ENCODE measurements at regions of chr2 and their contacts with region 1.

Region 1: GRCh38 chr2:191573216-191573615 is 104.7 kb upstream of the NABP1 start:
- DNase-seq: no peak
- H3K4me3 Mint-ChIP-seq: peak overlapping the region; percentile 23
- H3K27ac Mint-ChIP-seq: peak overlapping the region; percentile 15
- H3K4me1 Mint-ChIP-seq: peaks cover 52% of the 10 kb centered on the region
- H3K27me3 Mint-ChIP-seq: peaks cover 24% of the 10 kb centered on the region

Region 2: DNA sequence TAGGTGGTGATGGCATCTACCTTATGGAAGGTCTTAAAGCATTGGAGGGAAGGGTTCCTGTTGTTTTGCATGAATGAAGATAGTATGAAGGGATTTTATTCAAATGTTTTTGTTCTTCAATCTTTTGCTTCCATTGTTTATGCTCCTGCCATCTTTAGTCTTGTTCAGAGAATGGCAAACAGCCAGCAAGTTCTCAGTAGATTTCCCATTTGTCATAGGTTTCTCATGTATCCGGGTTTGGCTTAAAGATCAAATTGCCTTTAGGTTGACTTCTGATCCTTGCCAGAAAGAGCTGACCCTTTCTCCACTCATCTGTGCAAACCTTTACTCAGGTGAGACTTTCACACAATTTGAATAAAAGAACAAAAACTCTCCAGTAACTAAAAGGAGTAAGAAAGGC is 378.2 kb before region 1 on chr2:
- intact Hi-C with region 1: loop called (anchors 2 kb)
- DNase-seq: no peak
- H3K4me3 Mint-ChIP-seq: peak overlapping the region; percentile 28
- H3K27ac Mint-ChIP-seq: peak overlapping the region; percentile 93
- H3K4me1 Mint-ChIP-seq: peaks cover 49% of the 10 kb centered on the region
- H3K27me3 Mint-ChIP-seq: no peaks in the 10 kb centered on the region

Region 3: GRCh38 chr2:191501561-191502168 is 71.6 kb before region 1 on chr2:
- intact Hi-C with region 1: no loop called
- DNase-seq: no peak
- H3K4me3 Mint-ChIP-seq: no peak overlapping the region
- H3K27ac Mint-ChIP-seq: no peak overlapping the region
- H3K4me1 Mint-ChIP-seq: no peaks in the 10 kb centered on the region
- H3K27me3 Mint-ChIP-seq: no peaks in the 10 kb centered on the region

Region 4: GRCh38 chr2:191593622-191594416 is 20.6 kb after region 1 on chr2:
- intact Hi-C with region 1: loop called (anchors 2 kb)
- DNase-seq: no peak
- H3K4me3 Mint-ChIP-seq: no peak overlapping the region
- H3K27ac Mint-ChIP-seq: no peak overlapping the region
- H3K4me1 Mint-ChIP-seq: no peaks in the 10 kb centered on the region
- H3K27me3 Mint-ChIP-seq: peaks cover 1% of the 10 kb centered on the region